ENCODE measurements at regions of chr3 and their contacts with region 1.

Region 1: GRCh38 chr3:15629860-15630597 is 28.5 kb downstream of the BTD start:
- DNase-seq: peak in 13 of 14 experiments; percentile 29 to 86 (median 46)
- ATAC-seq: peak; percentile 100
- H3K4me3 ChIP-seq: peak overlapping the region; percentile 3
- H3K4me3 Mint-ChIP-seq: peak overlapping the region; percentile 35
- H3K27ac ChIP-seq: no peak overlapping the region
- H3K27ac Mint-ChIP-seq: peak overlapping the region; percentile 40
- H3K4me1 ChIP-seq: peaks cover 15% of the 10 kb centered on the region
- H3K4me1 Mint-ChIP-seq: peaks cover 21% of the 10 kb centered on the region
- H3K27me3 ChIP-seq: no peaks in the 10 kb centered on the region
- H3K27me3 Mint-ChIP-seq: no peaks in the 10 kb centered on the region
- CTCF ChIP-seq: peak; percentile 75

Region 2: GRCh38 chr3:15476378-15476777 is 153.7 kb before region 1 on chr3:
- CTCF ChIA-PET with region 1: no interaction called
- POLR2A ChIA-PET with region 1: no interaction called
- intact Hi-C with region 1: no loop called
- DNase-seq: no peak
- ATAC-seq: no peak
- H3K4me3 ChIP-seq: no peak overlapping the region
- H3K4me3 Mint-ChIP-seq: no peak overlapping the region
- H3K27ac ChIP-seq: no peak overlapping the region
- H3K27ac Mint-ChIP-seq: no peak overlapping the region
- H3K4me1 ChIP-seq: no peaks in the 10 kb centered on the region
- H3K4me1 Mint-ChIP-seq: no peaks in the 10 kb centered on the region
- H3K27me3 ChIP-seq: no peaks in the 10 kb centered on the region
- H3K27me3 Mint-ChIP-seq: no peaks in the 10 kb centered on the region
- CTCF ChIP-seq: no peak

Region 3: GRCh38 chr3:15486979-15487378 is 143.1 kb before region 1 on chr3:
- CTCF ChIA-PET with region 1: no interaction called
- POLR2A ChIA-PET with region 1: no interaction called
- intact Hi-C with region 1: no loop called
- DNase-seq: no peak
- ATAC-seq: no peak
- H3K4me3 ChIP-seq: no peak overlapping the region
- H3K4me3 Mint-ChIP-seq: no peak overlapping the region
- H3K27ac ChIP-seq: no peak overlapping the region
- H3K27ac Mint-ChIP-seq: no peak overlapping the region
- H3K4me1 ChIP-seq: no peaks in the 10 kb centered on the region
- H3K4me1 Mint-ChIP-seq: no peaks in the 10 kb centered on the region
- H3K27me3 ChIP-seq: no peaks in the 10 kb centered on the region
- H3K27me3 Mint-ChIP-seq: no peaks in the 10 kb centered on the region
- CTCF ChIP-seq: no peak

Region 4: DNA sequence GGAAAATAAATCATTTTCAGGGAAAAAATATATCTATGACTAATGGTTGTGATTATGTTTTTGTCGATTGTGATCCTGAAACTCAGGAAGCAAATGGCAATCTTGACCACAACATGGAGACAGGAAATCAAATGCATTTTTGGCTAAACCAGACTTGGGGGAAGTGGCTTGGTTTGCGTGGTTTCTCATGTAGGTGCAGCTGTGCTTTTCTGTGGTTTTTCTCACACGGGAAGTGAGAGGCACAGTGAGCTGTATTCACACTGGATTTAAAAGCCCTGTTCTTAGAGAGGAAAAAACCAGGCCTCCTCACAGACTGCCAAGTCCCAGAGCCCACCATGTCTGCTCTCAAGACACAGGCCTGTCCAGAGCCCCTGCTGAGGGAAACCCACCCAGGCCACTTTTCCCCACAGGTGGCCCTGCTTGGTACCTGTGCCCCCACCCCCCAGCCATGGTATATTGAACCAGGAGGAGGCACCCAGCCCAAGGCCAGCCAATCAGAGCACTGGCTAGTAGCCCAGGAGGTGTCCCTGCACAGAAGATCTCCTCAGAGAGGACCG is 17.7 kb after region 1 on chr3:
- CTCF ChIA-PET with region 1: no interaction called
- POLR2A ChIA-PET with region 1: interaction called, 3 read pairs
- intact Hi-C with region 1: loop called in 1 of 2 experiments (anchors 1 kb)
- DNase-seq: peak in 13 of 14 experiments; percentile 24 to 82 (median 40)
- ATAC-seq: peak; percentile 93
- H3K4me3 ChIP-seq: peak overlapping the region; percentile 11
- H3K4me3 Mint-ChIP-seq: peak overlapping the region; percentile 74
- H3K27ac ChIP-seq: no peak overlapping the region
- H3K27ac Mint-ChIP-seq: peak overlapping the region; percentile 50
- H3K4me1 ChIP-seq: peaks cover 49% of the 10 kb centered on the region
- H3K4me1 Mint-ChIP-seq: peaks cover 56% of the 10 kb centered on the region
- H3K27me3 ChIP-seq: no peaks in the 10 kb centered on the region
- H3K27me3 Mint-ChIP-seq: no peaks in the 10 kb centered on the region
- CTCF ChIP-seq: no peak

Region 5: DNA sequence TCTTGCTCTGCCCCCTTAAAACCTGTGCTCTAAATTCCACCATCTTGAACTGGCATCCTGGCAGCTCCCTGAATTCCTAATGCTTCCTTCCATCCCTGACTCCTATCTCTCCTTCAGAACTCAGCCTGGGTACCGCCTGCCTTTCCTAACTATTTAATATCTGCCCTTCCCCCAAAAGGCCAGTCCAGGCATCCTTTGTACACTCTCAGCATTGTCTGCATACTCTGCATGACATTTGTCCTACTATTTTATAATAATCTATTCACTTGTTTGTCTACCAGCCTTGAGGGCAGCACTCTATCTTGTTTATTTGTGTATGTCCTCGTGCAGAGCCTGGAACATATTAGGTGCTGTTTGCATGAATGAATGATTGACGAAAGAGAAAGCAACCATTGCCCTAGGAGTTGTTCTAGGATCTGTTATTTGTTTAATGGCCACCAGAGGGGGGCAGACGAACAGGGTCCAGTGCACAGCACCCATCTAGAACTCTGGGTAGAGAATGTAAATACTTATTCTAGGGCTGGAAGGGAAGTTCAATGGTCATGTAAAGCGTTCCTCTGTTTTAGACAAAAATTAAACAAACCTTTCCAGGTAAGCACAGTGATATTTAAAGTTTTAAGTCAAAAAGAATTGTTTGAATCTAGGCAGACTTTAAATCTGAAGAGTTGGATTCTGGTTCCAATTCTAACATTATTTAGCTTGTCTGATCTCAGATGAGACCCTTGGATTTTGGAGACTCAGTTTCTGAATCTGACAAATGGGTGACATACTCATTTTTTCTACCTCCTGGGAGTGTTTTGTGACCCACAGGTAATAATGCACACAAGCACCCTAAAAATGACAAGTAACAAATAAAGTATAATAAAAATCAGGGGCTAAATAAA is 418.6 kb after region 1 on chr3:
- CTCF ChIA-PET with region 1: no interaction called
- POLR2A ChIA-PET with region 1: no interaction called
- intact Hi-C with region 1: loop called in 1 of 2 experiments (anchors 10 kb)
- DNase-seq: peak in 11 of 14 experiments; percentile 5 to 70 (median 17)
- ATAC-seq: peak; percentile 87
- H3K4me3 ChIP-seq: no peak overlapping the region
- H3K4me3 Mint-ChIP-seq: no peak overlapping the region
- H3K27ac ChIP-seq: no peak overlapping the region
- H3K27ac Mint-ChIP-seq: no peak overlapping the region
- H3K4me1 ChIP-seq: no peaks in the 10 kb centered on the region
- H3K4me1 Mint-ChIP-seq: peaks cover 6% of the 10 kb centered on the region
- H3K27me3 ChIP-seq: no peaks in the 10 kb centered on the region
- H3K27me3 Mint-ChIP-seq: no peaks in the 10 kb centered on the region
- CTCF ChIP-seq: peak; percentile 82

Region 6: GRCh38 chr3:16177962-16178627 is 548.1 kb after region 1 on chr3:
- CTCF ChIA-PET with region 1: no interaction called
- POLR2A ChIA-PET with region 1: no interaction called
- intact Hi-C with region 1: loop called in 1 of 2 experiments (anchors 5 kb)
- DNase-seq: peak; percentile 24 to 75 (median 48)
- ATAC-seq: peak; percentile 68
- H3K4me3 ChIP-seq: no peak overlapping the region
- H3K4me3 Mint-ChIP-seq: no peak overlapping the region
- H3K27ac ChIP-seq: no peak overlapping the region
- H3K27ac Mint-ChIP-seq: no peak overlapping the region
- H3K4me1 ChIP-seq: peaks cover 7% of the 10 kb centered on the region
- H3K4me1 Mint-ChIP-seq: no peaks in the 10 kb centered on the region
- H3K27me3 ChIP-seq: peaks cover 0 to 2% of the 10 kb centered on the region in 2 experiments
- H3K27me3 Mint-ChIP-seq: peaks cover 22% of the 10 kb centered on the region
- CTCF ChIP-seq: peak; percentile 80

Region 7: GRCh38 chr3:16247276-16248061 is 617.4 kb after region 1 on chr3:
- CTCF ChIA-PET with region 1: no interaction called
- POLR2A ChIA-PET with region 1: no interaction called
- intact Hi-C with region 1: loop called (anchors 2 kb)
- DNase-seq: peak; percentile 58 to 89 (median 70)
- ATAC-seq: peak; percentile 94
- H3K4me3 ChIP-seq: no peak overlapping the region
- H3K4me3 Mint-ChIP-seq: no peak overlapping the region
- H3K27ac ChIP-seq: no peak overlapping the region
- H3K27ac Mint-ChIP-seq: no peak overlapping the region
- H3K4me1 ChIP-seq: peaks cover 9% of the 10 kb centered on the region
- H3K4me1 Mint-ChIP-seq: peaks cover 9% of the 10 kb centered on the region
- H3K27me3 ChIP-seq: no peaks in the 10 kb centered on the region
- H3K27me3 Mint-ChIP-seq: no peaks in the 10 kb centered on the region
- CTCF ChIP-seq: peak; percentile 91

Region 8: GRCh38 chr3:16550676-16551341 is 920.8 kb after region 1 on chr3:
- CTCF ChIA-PET with region 1: no interaction called
- POLR2A ChIA-PET with region 1: no interaction called
- intact Hi-C with region 1: loop called in 1 of 2 experiments (anchors 10 kb)
- DNase-seq: peak; percentile 43 to 90 (median 62)
- ATAC-seq: peak; percentile 100
- H3K4me3 ChIP-seq: no peak overlapping the region
- H3K4me3 Mint-ChIP-seq: no peak overlapping the region
- H3K27ac ChIP-seq: no peak overlapping the region
- H3K27ac Mint-ChIP-seq: peak overlapping the region; percentile 16
- H3K4me1 ChIP-seq: peaks cover 5% of the 10 kb centered on the region
- H3K4me1 Mint-ChIP-seq: no peaks in the 10 kb centered on the region
- H3K27me3 ChIP-seq: no peaks in the 10 kb centered on the region
- H3K27me3 Mint-ChIP-seq: peaks cover 4% of the 10 kb centered on the region
- CTCF ChIP-seq: peak; percentile 91

Measured in CD4-positive, alpha-beta T cell (primary cell).